Mammary epithelial cell (primary cell): ENCODE measurements at regions of chr1 and their contacts with region 1.

Region 1: GRCh38 chr1:57736940-57737339 is 313.1 kb upstream of the DAB1 start:
- DNase-seq: no peak
- H3K4me3 ChIP-seq: no peak overlapping the region
- H3K27ac ChIP-seq: no peak overlapping the region
- H3K4me1 ChIP-seq: no peaks in the 10 kb centered on the region
- H3K27me3 ChIP-seq: peaks cover 2% of the 10 kb centered on the region
- CTCF ChIP-seq: no peak

Region 2: DNA sequence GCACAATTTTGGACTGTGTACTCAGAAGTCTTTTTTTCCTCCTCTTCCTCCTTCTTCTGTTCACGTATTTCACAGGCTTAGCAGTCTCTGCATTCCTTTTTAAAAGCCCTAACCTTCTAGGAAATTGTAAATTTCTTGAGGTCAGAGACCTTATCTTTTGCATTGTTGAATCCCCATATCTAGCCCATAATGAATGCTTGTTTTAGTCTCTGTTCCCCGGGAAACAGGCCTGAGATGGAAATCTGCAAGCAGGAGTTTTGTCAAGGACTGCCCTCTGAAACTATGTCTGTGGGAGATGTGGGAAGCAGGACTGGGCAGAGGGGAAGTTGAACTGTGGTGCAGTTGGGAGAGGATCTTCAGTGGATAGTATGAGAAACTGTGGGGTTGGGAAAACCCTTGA is 40.9 kb before region 1 on chr1:
- CTCF ChIA-PET with region 1: no interaction called
- dilution Hi-C with region 1: loop called (anchors 5 kb)
- in situ Hi-C with region 1: no loop called
- intact Hi-C with region 1: no loop called
- DNase-seq: no peak
- H3K4me3 ChIP-seq: no peak overlapping the region
- H3K27ac ChIP-seq: no peak overlapping the region
- H3K4me1 ChIP-seq: no peaks in the 10 kb centered on the region
- H3K27me3 ChIP-seq: peaks cover 2% of the 10 kb centered on the region
- CTCF ChIP-seq: no peak